ENCODE measurements at regions of chr12 and their contacts with region 1.

Region 1: GRCh38 chr12:13913371-13913770 is 68.0 kb downstream of the GRIN2B start:
- DNase-seq: no peak
- H3K4me3 ChIP-seq: no peak overlapping the region
- H3K27ac ChIP-seq: no peak overlapping the region
- H3K27me3 ChIP-seq: no peaks in the 10 kb centered on the region
- CTCF ChIP-seq: no peak

Region 2: GRCh38 chr12:12954356-12954755 is 959.0 kb before region 1 on chr12:
- CTCF ChIA-PET with region 1: no interaction called
- POLR2A ChIA-PET with region 1: interaction called, 11 read pairs
- DNase-seq: no peak
- H3K4me3 ChIP-seq: no peak overlapping the region
- H3K27ac ChIP-seq: no peak overlapping the region
- H3K27me3 ChIP-seq: no peaks in the 10 kb centered on the region
- CTCF ChIP-seq: no peak

Region 3: GRCh38 chr12:13900718-13901117 is 12.7 kb before region 1 on chr12:
- CTCF ChIA-PET with region 1: no interaction called
- POLR2A ChIA-PET with region 1: no interaction called
- DNase-seq: no peak
- H3K4me3 ChIP-seq: no peak overlapping the region
- H3K27ac ChIP-seq: no peak overlapping the region
- H3K27me3 ChIP-seq: no peaks in the 10 kb centered on the region
- CTCF ChIP-seq: no peak